Right ventricle myocardium inferior (tissue), 1 donor: ENCODE measurements at regions of chr11 and their contacts with region 1.

Region 1: DNA sequence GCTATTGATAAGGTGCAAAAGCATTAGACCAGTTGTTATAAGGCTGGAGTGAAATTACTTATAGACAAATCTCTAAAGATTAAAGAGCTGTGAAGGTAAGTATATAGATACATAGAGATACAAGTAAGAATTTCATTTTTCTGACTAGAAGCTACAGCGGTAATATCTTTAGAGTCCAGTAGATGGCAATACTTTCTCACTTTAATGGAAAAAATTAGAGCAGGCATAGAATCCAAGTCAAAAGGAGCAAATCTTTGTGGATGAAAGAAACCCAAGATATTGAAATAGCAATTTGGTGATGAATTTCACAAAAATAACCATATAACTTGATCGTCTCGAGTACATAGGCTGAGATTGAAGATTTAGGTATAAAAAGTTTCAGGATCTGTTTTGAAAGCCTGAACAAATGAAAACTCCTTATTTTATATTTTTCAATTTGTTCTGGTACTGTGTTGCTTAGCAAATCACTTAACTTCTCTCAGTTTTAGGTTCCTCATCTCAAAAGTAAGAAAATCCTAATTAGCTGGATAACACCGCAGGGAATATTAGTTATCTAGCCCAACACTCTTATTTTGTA is 81.9 kb downstream of the UVRAG start:
- DNase-seq: no peak
- ATAC-seq: no peak

Region 2: DNA sequence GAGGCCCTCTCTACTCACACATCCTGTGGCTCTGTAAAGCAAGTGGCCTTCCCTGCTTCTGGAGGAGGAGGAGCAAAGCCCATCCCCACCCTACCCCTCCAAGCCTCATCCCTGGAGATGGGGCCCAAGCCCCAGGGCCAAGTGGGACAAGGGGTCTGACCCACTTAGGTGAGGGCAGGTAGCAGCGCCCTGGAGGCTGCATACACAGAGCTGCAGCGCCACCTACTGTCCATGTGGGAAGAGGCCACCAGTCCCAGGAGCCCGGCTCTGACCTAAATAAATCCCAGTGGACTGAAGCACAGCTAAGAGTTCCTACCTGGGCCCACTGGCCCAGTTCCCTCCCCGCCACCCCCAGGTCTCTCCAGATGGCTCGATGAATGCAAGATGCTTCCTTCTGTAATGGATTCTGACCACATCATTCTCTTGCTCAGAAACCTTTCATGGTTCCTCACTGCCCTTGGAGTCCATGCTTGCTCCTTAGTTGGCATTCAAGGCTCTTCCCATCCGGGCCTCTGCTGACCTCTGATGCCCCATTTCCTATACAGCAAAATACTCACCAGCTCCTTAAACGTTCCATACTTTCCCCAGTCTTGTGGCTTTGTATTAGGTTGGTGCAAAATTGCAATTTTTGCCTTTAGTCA is 421.9 kb after region 1 on chr11:
- intact Hi-C with region 1: loop called (anchors 5 kb)
- DNase-seq: peak; percentile 89
- ATAC-seq: peak; percentile 87